Cardiac septum (tissue), 1 donor: ENCODE measurements at regions of chr19 and their contacts with region 1.

Region 1: DNA sequence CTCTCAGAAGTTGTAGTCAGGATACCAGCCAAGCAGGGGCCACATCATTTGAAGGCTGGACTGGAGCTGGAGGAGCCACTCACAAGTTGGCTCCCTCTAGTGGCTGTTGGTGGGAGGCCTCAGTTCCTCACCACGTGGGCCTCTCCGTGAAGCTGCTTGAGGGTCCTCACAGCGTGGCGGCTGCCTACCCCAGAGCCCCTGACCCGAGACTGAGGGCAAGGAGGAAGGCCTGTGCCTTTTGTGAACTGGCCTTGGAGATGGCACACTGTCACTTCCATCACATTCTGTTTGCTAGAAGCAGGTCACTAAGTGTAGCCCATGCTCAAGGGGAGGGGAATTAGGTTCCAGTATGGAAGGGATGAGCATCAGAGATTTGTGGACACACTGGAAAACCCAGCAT is 14.6 kb downstream of the GNA11 start:
- DNase-seq: no peak

Region 2: GRCh38 chr19:2962045-2962561 is 146.7 kb before region 1 on chr19:
- intact Hi-C with region 1: loop called (anchors 5 kb)
- DNase-seq: no peak

Region 3: DNA sequence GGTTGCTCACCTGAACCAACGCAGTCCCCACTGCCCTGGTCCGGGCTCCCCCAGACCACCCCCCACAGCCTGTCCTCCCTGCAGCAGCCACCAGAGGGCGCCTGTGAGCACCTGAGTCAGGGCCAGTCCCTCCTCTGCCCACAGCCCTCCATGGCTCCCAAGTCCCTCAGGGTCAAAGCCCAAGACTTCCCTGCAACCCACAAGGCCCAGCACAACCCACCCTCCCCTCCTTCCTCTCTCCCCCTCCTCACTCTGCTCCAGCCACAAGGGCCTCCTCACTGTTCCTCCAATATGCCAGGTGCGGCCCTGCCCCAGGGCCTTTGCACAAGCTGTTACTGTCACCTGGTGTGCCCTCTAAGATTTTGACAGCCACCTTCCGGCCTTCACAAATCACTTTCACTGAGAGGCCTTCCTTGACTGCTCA is 37.9 kb after region 1 on chr19:
- intact Hi-C with region 1: no loop called
- DNase-seq: no peak